ENCODE measurements at regions of chr7 and their contacts with region 1.

Region 1: GRCh38 chr7:129351320-129351719 is 82.9 kb upstream of the STRIP2 start:
- DNase-seq: no peak
- ATAC-seq: no peak

Region 2: DNA sequence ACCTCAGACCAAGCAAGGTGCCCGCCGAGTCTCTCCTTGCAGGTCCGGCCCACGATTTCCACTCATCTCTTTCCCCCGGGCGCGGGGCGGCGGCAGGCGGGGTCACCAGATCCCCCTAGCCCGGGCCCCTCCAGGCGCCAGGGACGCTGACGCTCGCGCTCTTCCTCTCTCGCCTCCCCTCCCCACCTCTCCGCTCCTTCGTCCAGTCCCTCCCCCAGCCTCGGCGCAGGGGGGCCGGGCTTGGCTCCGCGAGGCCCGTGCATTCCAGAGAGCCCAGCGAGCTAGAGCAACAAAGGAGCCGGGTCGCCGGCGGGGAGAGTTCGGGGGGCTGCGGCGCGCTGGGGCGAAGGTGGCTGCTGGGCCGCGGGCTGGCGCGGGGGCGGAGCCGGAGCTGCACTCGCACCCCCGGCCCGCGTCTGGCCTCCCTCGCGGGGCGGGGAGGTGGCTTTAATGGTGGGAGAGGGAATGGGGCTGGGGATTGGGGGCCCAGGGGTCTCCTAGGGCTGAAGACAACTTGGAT is 162.9 kb before region 1 on chr7 and contains the start of gene SMO:
- intact Hi-C with region 1: no loop called
- DNase-seq: peak; percentile 68
- ATAC-seq: peak; percentile 91
- total RNA-seq, gene SMO: 5.0 TPM

Region 3: GRCh38 chr7:129644634-129645230 is 293.4 kb after region 1 on chr7:
- intact Hi-C with region 1: loop called (anchors 10 kb)
- DNase-seq: no peak
- ATAC-seq: peak; percentile 42